Posterior vena cava (tissue), 2 donors: ENCODE measurements at regions of chr14 and their contacts with region 1.

Region 1: DNA sequence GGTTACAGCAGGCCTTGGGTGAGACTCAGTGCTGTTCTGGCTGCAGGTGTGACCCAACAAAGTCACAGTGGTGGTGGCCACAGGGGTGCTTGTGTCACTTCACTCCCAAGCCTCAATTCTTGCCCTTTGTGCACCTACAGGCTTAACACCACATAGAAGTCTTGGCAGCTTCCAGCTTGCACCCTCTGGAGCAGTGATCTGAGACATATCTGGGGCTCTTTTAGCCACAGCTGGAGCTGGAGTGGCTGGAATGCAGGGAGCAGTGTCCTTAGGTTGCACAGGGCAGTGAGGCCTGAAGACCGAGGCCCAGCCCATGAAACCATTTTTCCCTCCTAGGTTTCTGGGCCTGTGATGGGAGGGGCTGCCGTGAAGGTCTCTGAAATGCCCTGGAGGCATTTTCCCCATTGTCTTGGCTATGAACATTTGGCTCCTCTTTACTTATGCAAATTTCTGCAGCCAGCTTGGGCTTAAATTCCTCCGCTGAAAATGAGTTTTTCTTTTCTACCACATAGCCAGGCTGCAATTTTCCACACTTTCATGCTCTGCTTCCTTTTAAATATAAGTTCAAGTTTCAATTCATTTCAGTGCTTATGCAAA is 37.7 kb downstream of the ADAM21 start:
- DNase-seq: no peak

Region 2: GRCh38 chr14:70514168-70515069 is 24.7 kb after region 1 on chr14:
- intact Hi-C with region 1: loop called in 1 of 2 experiments (anchors 2 kb)
- DNase-seq: no peak

Region 3: GRCh38 chr14:71638523-71639196 is 1149.0 kb after region 1 on chr14:
- intact Hi-C with region 1: no loop called
- DNase-seq: no peak